K562 (cell line): ENCODE measurements at regions of chr12 and their contacts with region 1.

Region 1: GRCh38 chr12:120625557-120626419 is 14.6 kb upstream of the CABP1 start:
- DNase-seq: peak; percentile 88 to 95 (median 93)
- ATAC-seq: peak; percentile 96
- H3K4me3 ChIP-seq: 0 out of 2 replicates have a peak overlapping the region, but pooled peaks have one; percentile 0
- H3K27ac ChIP-seq: peak overlapping the region; percentile 69
- H3K4me1 ChIP-seq: peaks cover 3 to 10% of the 10 kb centered on the region in 2 experiments; a peak in 4 of 5 replicates
- H3K27me3 ChIP-seq: peaks cover 2 to 4% of the 10 kb centered on the region in 2 experiments; a peak in 1 of 5 replicates
- CTCF ChIP-seq: peak in 2 of 3 experiments; percentile 13 to 37; a peak in 2 of 6 replicates
- EP300 ChIP-seq: no peak
- POLR2A ChIP-seq: no peak; the same call in 1 of the 2 replicates
- RAD21 ChIP-seq: no peak

Region 2: GRCh38 chr12:120640840-120641833 is 15.3 kb after region 1 on chr12:
- CTCF ChIA-PET with region 1: no interaction called
- POLR2A ChIA-PET with region 1: interaction called, 10 read pairs
- in situ Hi-C with region 1: no loop called
- intact Hi-C with region 1: no loop called
- DNase-seq: peak; percentile 66 to 79 (median 74)
- ATAC-seq: peak; percentile 92
- H3K4me3 ChIP-seq: peak overlapping the region; percentile 39
- H3K27ac ChIP-seq: no peak overlapping the region
- H3K4me1 ChIP-seq: peaks cover 0 to 19% of the 10 kb centered on the region in 2 experiments; a peak in 3 of 5 replicates
- H3K27me3 ChIP-seq: peaks cover 29 to 40% of the 10 kb centered on the region in 2 experiments
- CTCF ChIP-seq: peak in 2 of 3 experiments; percentile 21 to 27; a peak in 2 of 6 replicates
- EP300 ChIP-seq: no peak
- POLR2A ChIP-seq: no peak
- RAD21 ChIP-seq: no peak

Region 3: GRCh38 chr12:120820885-120821510 is 195.2 kb after region 1 on chr12:
- CTCF ChIA-PET with region 1: no interaction called
- POLR2A ChIA-PET with region 1: no interaction called
- in situ Hi-C with region 1: no loop called
- intact Hi-C with region 1: no loop called
- DNase-seq: no peak
- ATAC-seq: no peak
- H3K4me3 ChIP-seq: no peak overlapping the region
- H3K27ac ChIP-seq: no peak overlapping the region
- H3K4me1 ChIP-seq: peaks cover 0 to 3% of the 10 kb centered on the region in 2 experiments; a peak in 1 of 5 replicates
- H3K27me3 ChIP-seq: no peaks in the 10 kb centered on the region
- CTCF ChIP-seq: no peak
- EP300 ChIP-seq: no peak
- POLR2A ChIP-seq: no peak
- RAD21 ChIP-seq: no peak